A673 (cell line): ENCODE measurements at regions of chr6 and their contacts with region 1.

Region 1: DNA sequence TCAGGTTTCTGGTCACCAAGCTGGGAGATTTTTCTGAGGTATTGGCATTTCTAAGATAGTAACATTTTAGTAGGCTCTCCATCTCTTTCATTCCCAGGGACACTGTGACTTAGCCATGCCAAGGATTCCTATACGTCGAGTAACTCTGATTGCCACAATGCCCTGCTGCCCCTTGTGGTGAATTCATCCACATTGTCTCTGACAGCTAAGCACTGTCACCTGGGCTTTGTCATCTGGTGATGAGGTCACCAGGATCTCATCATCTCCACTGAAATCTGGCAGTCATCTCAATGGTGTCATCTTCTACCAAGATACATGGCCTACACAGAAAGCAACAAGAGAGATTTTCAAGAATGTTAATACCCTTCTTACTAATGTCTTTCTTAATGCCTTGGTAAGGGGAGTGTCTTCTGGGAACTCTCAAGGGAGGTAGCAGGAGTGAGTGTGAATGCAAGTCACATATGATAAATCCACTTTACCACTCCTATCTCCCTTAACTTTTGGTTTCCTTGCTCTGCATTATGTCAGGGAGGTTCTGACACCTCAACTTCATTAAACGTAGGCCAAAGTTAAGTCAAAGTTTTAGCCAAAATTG is 246.7 kb downstream of the CD109 start:
- DNase-seq: peak; percentile 7
- H3K4me3 ChIP-seq: no peak overlapping the region
- H3K27ac ChIP-seq: no peak overlapping the region
- H3K4me1 ChIP-seq: no peaks in the 10 kb centered on the region
- H3K27me3 ChIP-seq: no peaks in the 10 kb centered on the region
- CTCF ChIP-seq: 0 out of 2 replicates have a peak, but pooled peaks have one; percentile 15

Region 2: GRCh38 chr6:72798196-72798595 is 1144.5 kb before region 1 on chr6:
- CTCF ChIA-PET with region 1: no interaction called
- POLR2A ChIA-PET with region 1: no interaction called
- intact Hi-C with region 1: no loop called
- DNase-seq: peak; percentile 14
- H3K4me3 ChIP-seq: no peak overlapping the region
- H3K27ac ChIP-seq: no peak overlapping the region
- H3K4me1 ChIP-seq: peaks cover 14% of the 10 kb centered on the region
- H3K27me3 ChIP-seq: no peaks in the 10 kb centered on the region
- CTCF ChIP-seq: no peak

Region 3: GRCh38 chr6:73085443-73085871 is 857.2 kb before region 1 on chr6:
- CTCF ChIA-PET with region 1: no interaction called
- POLR2A ChIA-PET with region 1: no interaction called
- intact Hi-C with region 1: no loop called
- DNase-seq: no peak
- H3K4me3 ChIP-seq: no peak overlapping the region
- H3K27ac ChIP-seq: no peak overlapping the region
- H3K4me1 ChIP-seq: no peaks in the 10 kb centered on the region
- H3K27me3 ChIP-seq: no peaks in the 10 kb centered on the region
- CTCF ChIP-seq: no peak

Region 4: DNA sequence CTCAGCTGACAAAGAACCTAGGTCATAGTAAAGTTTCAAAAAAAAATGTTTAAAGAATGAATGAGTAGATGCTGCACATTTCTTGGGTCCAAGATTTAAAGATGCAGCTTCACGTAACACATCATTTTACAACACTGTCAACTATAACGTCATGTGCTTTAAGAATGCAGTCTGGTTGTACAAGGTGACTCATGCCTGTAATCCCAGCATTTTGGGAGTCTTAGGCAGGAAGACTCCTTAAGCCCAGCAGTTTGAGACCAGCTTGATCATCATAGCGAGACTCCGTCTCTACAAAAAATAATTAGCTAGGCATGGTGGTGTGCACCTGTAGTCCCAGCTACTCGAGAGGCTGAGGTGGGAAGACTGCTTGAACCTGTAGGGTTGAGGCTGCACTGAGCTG is 310.8 kb before region 1 on chr6:
- CTCF ChIA-PET with region 1: no interaction called
- POLR2A ChIA-PET with region 1: no interaction called
- intact Hi-C with region 1: no loop called
- DNase-seq: no peak
- H3K4me3 ChIP-seq: no peak overlapping the region
- H3K27ac ChIP-seq: no peak overlapping the region
- H3K4me1 ChIP-seq: no peaks in the 10 kb centered on the region
- H3K27me3 ChIP-seq: no peaks in the 10 kb centered on the region
- CTCF ChIP-seq: no peak

Region 5: GRCh38 chr6:73929421-73929820 is 13.3 kb before region 1 on chr6:
- CTCF ChIA-PET with region 1: no interaction called
- POLR2A ChIA-PET with region 1: no interaction called
- intact Hi-C with region 1: loop called (anchors 1 kb)
- DNase-seq: no peak
- H3K4me3 ChIP-seq: no peak overlapping the region
- H3K27ac ChIP-seq: no peak overlapping the region
- H3K4me1 ChIP-seq: no peaks in the 10 kb centered on the region
- H3K27me3 ChIP-seq: no peaks in the 10 kb centered on the region
- CTCF ChIP-seq: no peak

Region 6: GRCh38 chr6:74638412-74638811 is 695.7 kb after region 1 on chr6:
- CTCF ChIA-PET with region 1: no interaction called
- POLR2A ChIA-PET with region 1: no interaction called
- intact Hi-C with region 1: no loop called
- DNase-seq: no peak
- H3K4me3 ChIP-seq: no peak overlapping the region
- H3K27ac ChIP-seq: no peak overlapping the region
- H3K4me1 ChIP-seq: no peaks in the 10 kb centered on the region
- H3K27me3 ChIP-seq: no peaks in the 10 kb centered on the region
- CTCF ChIP-seq: no peak